Endothelial cell of umbilical vein (primary cell): ENCODE measurements at regions of chr15 and their contacts with region 1.

Region 1: GRCh38 chr15:63188926-63189871 is at the start of gene RAB8B:
- DNase-seq: peak; percentile 94
- H3K4me3 ChIP-seq: peak within 1 kb of the TSS; percentile 62 to 88 (median 74)
- H3K27ac ChIP-seq: peak within 1 kb of the TSS; percentile 58
- H3K4me1 ChIP-seq: peaks cover 30% of the 10 kb centered on the region
- H3K27me3 ChIP-seq: no peaks in the 10 kb centered on the region
- CTCF ChIP-seq: no peak
- POLR2A ChIP-seq: peak; percentile 86
- total RNA-seq, gene RAB8B: 50.3 and 52.5 TPM in 2 replicates

Region 2: DNA sequence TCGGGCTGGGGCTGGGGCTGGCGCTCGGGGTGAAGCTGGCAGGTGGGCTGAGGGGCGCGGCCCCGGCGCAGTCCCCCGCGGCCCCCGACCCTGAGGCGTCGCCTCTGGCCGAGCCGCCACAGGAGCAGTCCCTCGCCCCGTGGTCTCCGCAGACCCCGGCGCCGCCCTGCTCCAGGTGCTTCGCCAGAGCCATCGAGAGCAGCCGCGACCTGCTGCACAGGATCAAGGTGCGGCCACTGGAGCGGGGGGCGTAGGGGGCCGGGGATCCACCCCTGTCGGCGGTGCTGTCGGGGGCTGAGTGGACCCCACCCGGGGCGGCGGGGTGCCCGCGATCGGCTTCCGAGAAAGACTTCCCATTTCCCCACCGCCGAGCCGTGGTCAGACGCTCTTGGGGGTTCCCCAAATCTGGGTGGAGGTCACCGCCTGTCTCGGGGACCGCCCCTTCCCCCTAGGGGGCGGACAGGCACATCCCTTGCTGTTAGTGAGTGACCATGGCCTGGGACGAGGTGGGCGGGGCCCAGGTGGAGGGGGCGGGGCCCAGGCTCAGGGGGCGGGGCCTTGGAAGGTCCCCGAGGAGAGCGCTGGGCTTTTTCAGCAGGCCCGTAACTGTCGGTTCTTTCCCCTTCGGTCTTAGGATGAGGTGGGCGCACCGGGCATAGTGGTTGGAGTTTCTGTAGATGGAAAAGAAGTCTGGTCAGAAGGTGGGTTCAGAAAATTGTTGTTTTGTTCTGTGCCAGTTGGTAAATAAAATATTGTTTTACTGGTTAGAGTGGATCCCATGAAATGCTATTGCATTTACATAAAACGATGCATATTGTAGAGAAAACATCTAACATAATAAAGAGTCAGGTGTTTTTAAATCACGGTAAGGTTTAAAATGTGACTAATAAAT is 67.0 kb before region 1 on chr15:
- CTCF ChIA-PET with region 1: no interaction called
- POLR2A ChIA-PET with region 1: no interaction called
- dilution Hi-C with region 1: no loop called
- intact Hi-C with region 1: loop called (anchors 1 kb)
- DNase-seq: peak; percentile 86
- H3K4me3 ChIP-seq: peak overlapping the region; percentile 88 to 99 (median 88)
- H3K27ac ChIP-seq: peak overlapping the region; percentile 61
- H3K4me1 ChIP-seq: peaks cover 4% of the 10 kb centered on the region
- H3K27me3 ChIP-seq: no peaks in the 10 kb centered on the region
- CTCF ChIP-seq: no peak
- POLR2A ChIP-seq: peak; percentile 24

Region 3: GRCh38 chr15:63203451-63204090 is 14.4 kb after region 1 on chr15:
- CTCF ChIA-PET with region 1: interaction called, 13 read pairs
- POLR2A ChIA-PET with region 1: interaction called, 10 read pairs
- dilution Hi-C with region 1: no loop called
- intact Hi-C with region 1: no loop called
- DNase-seq: no peak
- H3K4me3 ChIP-seq: no peak overlapping the region
- H3K27ac ChIP-seq: no peak overlapping the region
- H3K4me1 ChIP-seq: peaks cover 16% of the 10 kb centered on the region
- H3K27me3 ChIP-seq: no peaks in the 10 kb centered on the region
- CTCF ChIP-seq: no peak
- POLR2A ChIP-seq: no peak

Region 4: GRCh38 chr15:63234451-63234870 is 45.3 kb after region 1 on chr15:
- CTCF ChIA-PET with region 1: interaction called, 8 read pairs
- POLR2A ChIA-PET with region 1: no interaction called
- dilution Hi-C with region 1: no loop called
- intact Hi-C with region 1: loop called (anchors 1 kb)
- DNase-seq: peak; percentile 89
- H3K4me3 ChIP-seq: no peak overlapping the region
- H3K27ac ChIP-seq: peak overlapping the region; percentile 91
- H3K4me1 ChIP-seq: peaks cover 52% of the 10 kb centered on the region
- H3K27me3 ChIP-seq: no peaks in the 10 kb centered on the region
- CTCF ChIP-seq: no peak
- POLR2A ChIP-seq: no peak

Region 5: DNA sequence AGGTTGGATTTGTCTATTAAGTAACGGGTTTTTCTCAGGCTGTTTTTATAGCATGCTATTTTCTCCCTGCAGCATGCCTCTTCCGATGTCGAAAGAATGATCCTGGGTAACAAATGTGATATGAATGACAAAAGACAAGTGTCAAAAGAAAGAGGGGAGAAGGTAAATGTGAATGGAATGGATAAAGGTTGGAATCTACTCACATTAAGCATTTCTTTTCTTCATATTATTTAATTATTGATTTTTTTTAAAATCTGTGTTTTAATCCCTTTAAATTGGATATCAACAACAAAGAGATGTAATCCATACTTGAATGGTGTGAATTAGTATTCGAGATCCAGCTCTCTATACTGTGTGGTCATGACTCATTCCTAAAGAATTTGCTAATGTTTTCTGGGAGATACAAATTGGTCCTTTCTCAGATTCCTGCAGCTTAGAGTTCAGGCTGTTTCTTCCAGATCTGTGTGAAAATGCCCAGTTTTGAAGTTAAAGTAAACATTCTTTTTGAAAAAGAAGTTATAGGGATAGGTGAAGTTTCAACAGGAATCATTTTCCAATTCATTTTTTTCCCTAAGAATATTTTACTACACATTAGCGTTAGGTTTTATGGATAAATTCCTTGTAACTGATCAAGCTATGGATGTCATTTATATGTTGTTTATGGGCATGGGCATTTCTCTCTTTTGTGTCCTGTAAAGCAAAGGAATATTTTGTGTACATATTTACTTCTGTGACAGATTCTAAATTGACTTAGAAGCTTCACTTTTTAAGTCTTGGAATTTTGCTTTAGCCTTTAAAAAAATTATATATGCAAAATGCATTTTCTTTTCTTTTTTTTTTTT is 67.5 kb after region 1 on chr15:
- CTCF ChIA-PET with region 1: interaction called, 7 read pairs
- POLR2A ChIA-PET with region 1: no interaction called
- dilution Hi-C with region 1: no loop called
- intact Hi-C with region 1: loop called (anchors 1 kb)
- DNase-seq: peak; percentile 83
- H3K4me3 ChIP-seq: no peak overlapping the region
- H3K27ac ChIP-seq: peak overlapping the region; percentile 72
- H3K4me1 ChIP-seq: peaks cover 30% of the 10 kb centered on the region
- H3K27me3 ChIP-seq: no peaks in the 10 kb centered on the region
- CTCF ChIP-seq: no peak
- POLR2A ChIP-seq: no peak